Gastrocnemius medialis (tissue), 4 donors: ENCODE measurements at regions of chr20 and their contacts with region 1.

Region 1: DNA sequence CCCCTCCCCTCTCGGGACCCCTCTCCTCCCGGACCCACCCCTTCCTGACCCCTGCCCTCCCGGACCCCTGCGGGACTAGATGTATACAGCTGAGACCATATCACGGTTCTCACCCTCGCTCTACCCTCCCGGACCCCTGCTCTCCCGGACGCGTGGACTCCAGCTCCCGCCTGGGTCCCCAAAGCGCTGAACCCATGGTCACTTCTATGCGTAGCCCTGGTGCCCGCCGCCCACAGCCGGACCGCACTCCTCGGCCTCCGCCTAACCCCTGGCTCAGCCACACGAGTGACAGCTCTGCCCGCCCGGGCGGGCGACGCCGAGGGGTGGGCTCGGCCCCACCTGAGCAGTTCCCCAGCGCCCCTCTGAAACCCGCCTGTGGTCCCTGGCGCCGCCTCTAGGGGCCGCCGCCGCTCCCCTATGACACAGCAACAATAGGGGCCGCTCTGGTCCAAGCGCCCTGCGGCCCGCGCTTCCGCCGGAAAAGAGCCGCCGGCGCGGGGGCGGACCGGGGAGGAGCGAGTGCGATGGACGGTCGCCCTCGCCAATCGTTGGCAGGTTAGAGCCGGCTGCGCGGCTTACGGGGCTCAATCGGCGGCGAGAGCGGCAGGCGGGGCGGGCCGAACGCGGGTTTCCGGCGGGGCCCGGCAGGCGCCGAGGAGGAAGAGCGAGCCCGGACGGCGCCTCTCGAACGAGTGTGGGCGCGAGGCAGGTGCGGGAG is at the start of gene ADRM1:
- DNase-seq: peak; percentile 93 to 95
- ATAC-seq: peak; percentile 76 to 80
- H3K4me3 ChIP-seq: peak within 1 kb of the TSS; percentile 61 to 96 (median 70)
- H3K27ac ChIP-seq: peak within 1 kb of the TSS; percentile 90 to 100 (median 98)
- H3K4me1 ChIP-seq: peaks cover 25 to 39% of the 10 kb centered on the region in 2 donors
- H3K27me3 ChIP-seq: no peaks in the 10 kb centered on the region
- CTCF ChIP-seq: peak; percentile 95 to 99 (median 99)
- POLR2A ChIP-seq: peak; percentile 88 to 90
- total RNA-seq, gene ADRM1: 389 to 644 (median 611) TPM

Region 2: DNA sequence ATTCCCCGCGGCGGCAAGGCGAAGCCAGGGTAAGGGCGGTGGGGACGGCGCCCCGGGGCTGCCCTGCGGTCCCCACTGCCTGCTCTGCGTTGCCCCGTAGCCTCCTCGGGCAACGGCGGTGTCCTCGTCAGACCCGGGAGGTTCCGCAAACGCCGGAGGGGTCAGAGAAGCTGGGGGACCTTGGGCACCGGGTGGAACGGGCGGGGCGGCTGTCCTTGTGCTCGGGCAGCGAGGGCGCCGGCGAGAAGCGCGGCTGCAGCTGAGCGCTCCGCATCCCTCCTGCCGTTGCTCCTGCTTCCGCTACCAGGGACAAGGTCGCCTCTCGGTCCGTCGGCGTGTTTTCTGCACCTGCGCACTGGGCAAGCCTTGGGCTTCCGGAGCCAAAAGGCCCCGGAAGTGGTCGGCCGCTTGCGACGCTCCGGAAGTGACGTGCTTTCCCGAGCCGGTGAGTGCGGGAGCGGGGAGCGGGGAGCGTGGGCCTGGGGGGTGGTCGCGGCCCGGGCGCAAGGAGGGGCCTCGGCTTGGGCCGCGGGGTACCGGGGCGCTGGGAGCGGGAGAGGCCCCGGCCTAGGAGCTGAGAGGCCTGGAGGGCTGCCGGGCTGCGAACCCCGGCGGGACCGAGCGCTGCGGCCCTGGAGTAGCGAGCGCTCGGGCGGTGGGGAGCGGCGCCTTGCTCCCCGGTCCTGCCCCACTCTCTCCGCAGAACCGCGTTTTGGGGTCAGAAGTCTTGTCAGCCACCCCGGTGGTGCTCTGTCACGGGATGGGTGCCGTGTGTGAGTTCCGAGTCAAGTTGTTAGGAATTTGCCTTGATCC is 119.7 kb before region 1 on chr20 and contains the start of gene MTG2:
- in situ Hi-C with region 1: no loop called
- intact Hi-C with region 1: loop called (anchors 1 kb)
- DNase-seq: peak; percentile 92 to 94
- ATAC-seq: peak; percentile 98
- H3K4me3 ChIP-seq: peak within 1 kb of the TSS; percentile 77 to 99 (median 84)
- H3K27ac ChIP-seq: peak within 1 kb of the TSS; percentile 87 to 97 (median 90)
- H3K4me1 ChIP-seq: peaks cover 16 to 20% of the 10 kb centered on the region in 2 donors
- H3K27me3 ChIP-seq: no peaks in the 10 kb centered on the region
- CTCF ChIP-seq: peak in 3 of 5 experiments; percentile 14 to 25 (median 15)
- POLR2A ChIP-seq: peak; percentile 89 to 93
- total RNA-seq, gene MTG2: 21.0 to 50.8 (median 29.3) TPM

Region 3: GRCh38 chr20:62237801-62238571 is 64.5 kb before region 1 on chr20 and contains the start of gene OSBPL2:
- in situ Hi-C with region 1: no loop called
- intact Hi-C with region 1: loop called (anchors 1 kb)
- DNase-seq: peak; percentile 99
- ATAC-seq: peak; percentile 90
- H3K4me3 ChIP-seq: peak within 1 kb of the TSS; percentile 63 to 86 (median 74)
- H3K27ac ChIP-seq: peak within 1 kb of the TSS; percentile 87 to 96 (median 92)
- H3K4me1 ChIP-seq: peaks cover 42 to 57% of the 10 kb centered on the region in 2 donors
- H3K27me3 ChIP-seq: no peaks in the 10 kb centered on the region
- CTCF ChIP-seq: no peak
- POLR2A ChIP-seq: peak; percentile 80 to 84
- total RNA-seq, gene OSBPL2: 15.8 to 26.4 (median 19.6) TPM

Region 4: GRCh38 chr20:62282877-62283503 is 19.5 kb before region 1 on chr20:
- in situ Hi-C with region 1: no loop called
- intact Hi-C with region 1: loop called (anchors 2 kb)
- DNase-seq: peak; percentile 81 to 91
- ATAC-seq: peak; percentile 94 to 95
- H3K4me3 ChIP-seq: no peak overlapping the region
- H3K27ac ChIP-seq: peak overlapping the region; percentile 88 to 90 (median 89)
- H3K4me1 ChIP-seq: peaks cover 14 to 35% of the 10 kb centered on the region in 2 donors
- H3K27me3 ChIP-seq: no peaks in the 10 kb centered on the region
- CTCF ChIP-seq: no peak
- POLR2A ChIP-seq: peak in 1 of 2 donors; percentile 10

Region 5: GRCh38 chr20:62352402-62353288 is 50.1 kb after region 1 on chr20:
- in situ Hi-C with region 1: no loop called
- intact Hi-C with region 1: loop called (anchors 1 kb)
- DNase-seq: peak; percentile 80 to 98
- ATAC-seq: peak; percentile 83 to 85
- H3K4me3 ChIP-seq: peak overlapping the region in 3 of 4 donors; percentile 22 to 34 (median 31)
- H3K27ac ChIP-seq: peak overlapping the region; percentile 66 to 80 (median 76)
- H3K4me1 ChIP-seq: peaks cover 48 to 52% of the 10 kb centered on the region in 2 donors
- H3K27me3 ChIP-seq: no peaks in the 10 kb centered on the region
- CTCF ChIP-seq: peak in 4 of 5 experiments; percentile 18 to 46 (median 31)
- POLR2A ChIP-seq: no peak

Region 6: DNA sequence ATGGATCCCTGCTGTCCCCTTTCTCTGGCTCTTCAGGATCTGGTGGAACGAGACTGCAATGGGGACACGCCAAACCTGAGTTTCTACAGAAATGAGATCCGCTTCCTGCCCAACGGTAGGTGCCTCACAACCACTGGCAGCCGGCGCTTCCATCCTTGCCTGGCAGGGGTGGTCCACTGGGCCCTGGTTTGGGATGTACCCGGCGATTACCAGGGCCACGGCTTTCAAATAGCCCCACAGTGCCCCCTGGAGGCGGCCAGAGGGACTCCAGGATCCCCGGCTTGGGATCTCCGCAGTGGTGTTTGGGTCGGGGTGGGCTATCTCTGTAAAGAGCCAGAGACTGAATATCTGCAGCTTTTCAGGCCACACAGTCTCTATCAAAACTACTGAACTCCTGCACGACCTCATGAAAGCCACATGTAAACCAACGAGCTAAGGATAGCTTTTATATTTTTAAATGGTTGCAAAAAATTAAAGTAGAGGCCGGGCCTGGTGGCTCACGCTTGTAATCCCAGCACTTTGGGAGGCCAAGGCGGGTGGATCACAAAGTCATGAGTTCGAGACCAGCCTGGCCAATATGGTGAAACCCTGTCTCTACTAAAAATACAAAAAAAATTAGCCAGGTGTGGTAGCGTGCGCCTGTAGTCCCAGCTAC is 505.8 kb after region 1 on chr20:
- in situ Hi-C with region 1: no loop called
- intact Hi-C with region 1: loop called (anchors 10 kb)
- DNase-seq: peak in 1 of 2 donors; percentile 56
- ATAC-seq: peak; percentile 42 to 53
- H3K4me3 ChIP-seq: no peak overlapping the region
- H3K27ac ChIP-seq: no peak overlapping the region
- H3K4me1 ChIP-seq: peaks cover 15 to 27% of the 10 kb centered on the region in 2 donors
- H3K27me3 ChIP-seq: no peaks in the 10 kb centered on the region
- CTCF ChIP-seq: peak; percentile 85 to 98 (median 94)
- POLR2A ChIP-seq: no peak